H1 (cell line): ENCODE measurements at regions of chrX and their contacts with region 1.

Region 1: DNA sequence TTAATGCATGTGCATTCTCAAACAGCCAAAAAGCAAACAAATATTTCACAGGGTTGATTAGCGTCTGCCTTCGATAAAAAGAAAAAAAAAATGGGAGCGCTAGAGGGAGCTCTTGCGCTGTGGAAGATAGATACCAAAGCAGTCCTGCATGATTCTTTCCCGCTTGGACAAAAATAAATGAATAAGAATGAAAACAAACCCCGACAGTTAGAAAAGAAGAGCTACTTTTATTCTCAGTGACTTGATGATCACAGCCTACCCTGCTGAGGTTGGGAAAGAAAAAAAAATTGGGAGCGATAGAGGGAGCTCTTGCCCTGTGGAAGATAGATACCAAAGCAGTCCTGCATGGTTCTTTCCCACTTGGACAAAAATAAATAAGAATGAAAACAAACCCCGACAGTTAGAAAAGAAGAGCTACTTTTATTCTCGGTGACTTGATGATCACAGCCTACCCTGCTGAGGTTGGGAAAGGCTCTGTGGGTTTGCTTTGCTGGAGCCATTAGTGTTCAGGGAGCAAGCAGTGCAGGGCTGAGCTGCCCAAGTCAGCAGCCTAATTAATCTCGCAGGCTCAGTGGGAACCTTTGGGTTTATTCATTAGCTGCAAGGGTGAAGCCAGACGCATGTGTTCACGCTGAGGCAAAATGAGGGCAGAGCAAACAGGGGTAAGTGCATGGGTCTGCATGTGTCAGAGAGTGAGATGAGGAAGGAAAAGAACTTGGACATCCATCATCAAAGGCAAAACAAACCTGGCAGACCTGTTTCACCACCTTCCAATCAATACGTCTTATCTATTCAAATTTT is 249.3 kb upstream of the PRKX start:
- DNase-seq: no peak
- H3K4me3 ChIP-seq: no peak overlapping the region
- H3K27ac ChIP-seq: no peak overlapping the region
- H3K4me1 ChIP-seq: peaks cover 0 to 5% (median 3%) of the 10 kb centered on the region in 4 experiments; a peak in 4 of 7 replicates
- H3K27me3 ChIP-seq: no peaks in the 10 kb centered on the region
- CTCF ChIP-seq: peak in 2 of 3 experiments; percentile 12 to 42; a peak in 2 of 4 replicates
- EP300 ChIP-seq: no peak
- POLR2A ChIP-seq: no peak
- RAD21 ChIP-seq: peak in 1 of 2 experiments; percentile 56

Region 2: DNA sequence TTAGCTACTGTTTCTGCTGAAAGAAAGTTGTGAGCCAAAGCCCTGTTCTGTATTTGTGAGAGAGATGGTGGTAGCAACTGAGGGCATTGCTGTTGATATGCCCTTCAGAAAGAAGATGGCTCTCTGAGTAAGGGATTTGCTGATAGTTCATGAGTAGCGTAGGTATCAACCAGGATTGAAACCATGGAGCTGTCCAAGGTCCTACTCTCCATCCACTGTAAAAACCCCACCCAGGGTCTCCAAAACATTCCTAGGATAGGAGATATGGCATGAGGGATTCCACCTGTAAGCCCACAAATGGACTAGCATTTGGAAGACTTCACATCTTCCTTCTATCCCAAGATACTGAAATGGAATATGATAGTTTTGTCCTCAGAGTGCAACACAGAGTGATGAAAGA is 27.9 kb after region 1 on chrX:
- CTCF ChIA-PET with region 1: interaction called, 12 read pairs
- POLR2A ChIA-PET with region 1: no interaction called
- DNase-seq: no peak
- H3K4me3 ChIP-seq: no peak overlapping the region
- H3K27ac ChIP-seq: no peak overlapping the region
- H3K4me1 ChIP-seq: no peaks in the 10 kb centered on the region
- H3K27me3 ChIP-seq: no peaks in the 10 kb centered on the region
- CTCF ChIP-seq: no peak
- EP300 ChIP-seq: no peak
- POLR2A ChIP-seq: no peak
- RAD21 ChIP-seq: no peak

Region 3: GRCh38 chrX:4110964-4111363 is 148.3 kb after region 1 on chrX:
- CTCF ChIA-PET with region 1: no interaction called
- POLR2A ChIA-PET with region 1: no interaction called
- DNase-seq: no peak
- H3K4me3 ChIP-seq: no peak overlapping the region
- H3K27ac ChIP-seq: no peak overlapping the region
- H3K4me1 ChIP-seq: no peaks in the 10 kb centered on the region
- H3K27me3 ChIP-seq: no peaks in the 10 kb centered on the region
- CTCF ChIP-seq: peak in 1 of 3 experiments; percentile 26; a peak in 2 of 4 replicates
- EP300 ChIP-seq: no peak
- POLR2A ChIP-seq: no peak
- RAD21 ChIP-seq: peak; percentile 18 to 37; a peak in 3 of 4 replicates

Region 4: DNA sequence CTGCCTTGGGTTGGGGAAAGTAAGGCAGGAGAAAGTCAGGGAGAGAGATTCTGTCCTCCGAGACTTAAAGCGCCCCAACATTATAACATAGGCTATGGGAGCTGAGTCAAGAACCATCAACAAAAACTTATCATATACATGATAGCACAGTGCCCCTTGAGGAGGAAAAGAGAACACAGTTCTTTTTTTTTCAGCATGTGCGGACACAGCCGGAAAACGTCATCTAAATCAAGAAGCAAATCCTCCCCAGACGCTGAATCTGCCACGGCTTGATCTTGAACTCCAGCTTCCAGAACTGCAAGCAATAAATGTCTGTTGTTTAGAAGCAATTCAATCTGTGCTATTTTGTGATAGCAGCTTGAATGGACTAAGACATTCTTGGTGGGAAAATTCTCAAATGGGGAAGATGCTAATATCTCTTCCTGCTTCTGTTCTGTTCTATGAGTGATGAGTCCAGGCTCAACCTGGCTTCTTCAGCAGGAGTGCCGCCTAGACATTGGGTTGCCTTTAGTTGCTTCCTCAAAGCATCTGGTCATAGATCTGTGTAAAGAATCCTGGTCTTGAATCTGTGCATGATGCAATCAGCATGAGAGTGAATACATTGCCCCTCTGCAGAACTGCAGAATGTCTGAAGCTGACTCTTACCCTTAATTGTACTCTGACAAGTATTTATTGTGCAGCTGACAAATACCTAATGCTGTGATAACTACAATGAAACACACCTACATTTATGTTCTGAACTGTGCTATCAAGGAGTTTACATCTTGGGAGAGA is 300.5 kb after region 1 on chrX:
- CTCF ChIA-PET with region 1: interaction called, 10 read pairs
- POLR2A ChIA-PET with region 1: no interaction called
- DNase-seq: no peak
- H3K4me3 ChIP-seq: no peak overlapping the region
- H3K27ac ChIP-seq: no peak overlapping the region
- H3K4me1 ChIP-seq: peaks cover 0 to 3% (median under 1%) of the 10 kb centered on the region in 4 experiments; a peak in 1 of 7 replicates
- H3K27me3 ChIP-seq: no peaks in the 10 kb centered on the region
- CTCF ChIP-seq: peak in 2 of 3 experiments; percentile 13 to 35; a peak in 2 of 4 replicates
- EP300 ChIP-seq: no peak
- POLR2A ChIP-seq: no peak
- RAD21 ChIP-seq: peak; percentile 54 to 55